Naive thymus-derived CD4-positive, alpha-beta T cell (primary cell): ENCODE measurements at regions of chr19 and their contacts with region 1.

Region 1: GRCh38 chr19:19627621-19628500 is at the start of gene LPAR2:
- DNase-seq: peak; percentile 73 to 90 (median 82)
- ATAC-seq: peak; percentile 95
- H3K4me3 ChIP-seq: peak within 1 kb of the TSS; percentile 79
- H3K4me3 Mint-ChIP-seq: peak within 1 kb of the TSS; percentile 91 to 100 (median 96)
- H3K27ac ChIP-seq: peak within 1 kb of the TSS; percentile 92
- H3K27ac Mint-ChIP-seq: peak within 1 kb of the TSS; percentile 86 to 98 (median 95)
- H3K4me1 ChIP-seq: peaks cover 6 to 18% of the 10 kb centered on the region in 2 donors
- H3K4me1 Mint-ChIP-seq: peaks cover 17 to 32% (median 27%) of the 10 kb centered on the region in 7 donors
- H3K27me3 ChIP-seq: no peaks in the 10 kb centered on the region
- H3K27me3 Mint-ChIP-seq: no peaks in the 10 kb centered on the region
- total RNA-seq, gene LPAR2: 64.4 to 91.7 (median 75.0) TPM

Region 2: DNA sequence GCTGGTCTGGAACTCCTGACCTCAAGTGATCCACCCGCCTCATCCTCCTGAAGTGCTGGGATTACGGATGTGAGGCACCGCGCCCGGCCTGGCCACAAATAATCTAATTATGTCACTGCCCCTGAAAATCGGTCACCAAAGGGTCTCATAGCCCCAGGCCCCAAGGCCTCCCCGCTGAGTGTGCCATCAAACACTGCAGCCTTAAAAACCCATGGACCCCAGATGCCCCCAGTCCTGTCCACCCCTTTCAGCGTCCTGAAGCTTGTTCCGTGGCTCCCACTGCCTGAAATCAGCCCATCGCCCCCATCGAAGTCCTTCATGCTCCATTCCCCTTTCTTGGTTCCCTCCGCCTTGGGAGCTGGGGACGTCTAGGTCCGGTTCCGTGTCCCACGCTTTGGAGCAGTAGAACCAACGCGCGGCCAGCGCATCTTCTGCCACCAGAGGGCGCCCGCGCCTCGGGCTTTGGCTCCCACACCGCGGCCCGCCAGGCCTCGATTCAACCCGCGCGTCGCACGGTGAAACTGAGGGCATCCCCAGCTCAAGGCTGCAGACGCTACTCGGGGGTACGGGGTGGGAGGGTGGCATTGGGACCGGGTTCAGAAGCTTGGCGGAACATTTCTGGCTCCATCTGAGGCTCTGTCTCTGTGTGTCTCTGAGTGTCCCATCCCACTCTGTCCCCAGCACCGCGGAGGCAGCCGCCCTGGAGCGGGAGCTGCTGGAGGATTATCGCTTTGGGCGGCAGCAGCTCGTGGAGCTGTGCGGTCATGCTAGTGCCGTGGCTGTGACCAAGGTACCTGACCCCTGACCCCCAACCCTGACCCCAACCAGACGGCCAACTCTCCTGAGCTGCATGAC is 95.7 kb before region 1 on chr19:
- CTCF ChIA-PET with region 1: interaction called, 5 read pairs
- POLR2A ChIA-PET with region 1: interaction called, 3 read pairs
- intact Hi-C with region 1: loop called in 1 of 2 experiments (anchors 5 kb)
- DNase-seq: peak; percentile 69 to 93 (median 84)
- ATAC-seq: peak; percentile 90
- H3K4me3 ChIP-seq: no peak overlapping the region
- H3K4me3 Mint-ChIP-seq: no peak overlapping the region
- H3K27ac ChIP-seq: no peak overlapping the region
- H3K27ac Mint-ChIP-seq: peak overlapping the region in 8 of 9 donors; percentile 33 to 84 (median 76)
- H3K4me1 ChIP-seq: peaks cover 3 to 9% of the 10 kb centered on the region in 2 donors
- H3K4me1 Mint-ChIP-seq: peaks cover 7 to 22% (median 17%) of the 10 kb centered on the region in 7 donors
- H3K27me3 ChIP-seq: no peaks in the 10 kb centered on the region
- H3K27me3 Mint-ChIP-seq: peaks cover 0 to 6% (median 0%) of the 10 kb centered on the region in 5 donors

Region 3: DNA sequence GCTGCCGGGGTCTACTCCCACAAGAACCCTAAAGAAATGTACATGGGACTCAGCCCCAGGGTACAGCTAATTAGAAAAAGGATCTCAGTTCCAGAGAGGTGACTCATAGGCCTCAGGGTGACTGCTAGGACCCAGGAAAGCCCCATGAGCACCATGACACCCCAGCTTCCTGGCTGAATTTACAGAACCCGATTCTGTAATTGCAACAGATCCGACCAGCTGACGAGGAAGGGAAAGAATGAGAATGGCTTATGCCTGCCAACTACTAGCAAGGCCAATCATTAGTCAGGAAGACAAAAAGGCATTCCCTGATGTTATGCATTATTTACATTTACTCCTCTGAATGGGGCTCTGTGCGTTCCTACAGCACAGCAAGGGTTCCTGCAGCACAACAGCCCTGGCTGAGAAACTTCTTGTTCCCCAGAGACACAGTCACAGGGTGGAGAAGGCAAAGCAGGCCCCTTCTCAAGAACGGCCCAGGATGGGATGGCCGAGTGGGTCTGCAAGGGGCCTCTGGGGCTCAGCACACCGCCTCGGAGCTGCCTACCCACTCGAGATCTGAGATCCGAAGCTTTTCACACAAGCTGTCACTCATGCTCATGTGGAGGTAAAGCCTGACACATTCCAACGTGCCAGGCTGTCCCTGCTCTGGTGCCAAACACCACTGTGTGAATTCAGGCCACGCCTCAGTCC is 36.6 kb before region 1 on chr19:
- CTCF ChIA-PET with region 1: no interaction called
- POLR2A ChIA-PET with region 1: interaction called, 12 read pairs
- intact Hi-C with region 1: loop called in 1 of 2 experiments (anchors 5 kb)
- DNase-seq: peak in 2 of 9 donors; percentile 66 to 67
- ATAC-seq: peak; percentile 89
- H3K4me3 ChIP-seq: no peak overlapping the region
- H3K4me3 Mint-ChIP-seq: peak overlapping the region in 5 of 10 donors; percentile 12 to 81 (median 21)
- H3K27ac ChIP-seq: peak overlapping the region; percentile 54
- H3K27ac Mint-ChIP-seq: peak overlapping the region; percentile 10 to 89 (median 71)
- H3K4me1 ChIP-seq: peaks cover 17 to 30% of the 10 kb centered on the region in 2 donors
- H3K4me1 Mint-ChIP-seq: peaks cover 25 to 74% (median 54%) of the 10 kb centered on the region in 7 donors
- H3K27me3 ChIP-seq: no peaks in the 10 kb centered on the region
- H3K27me3 Mint-ChIP-seq: no peaks in the 10 kb centered on the region

Region 4: DNA sequence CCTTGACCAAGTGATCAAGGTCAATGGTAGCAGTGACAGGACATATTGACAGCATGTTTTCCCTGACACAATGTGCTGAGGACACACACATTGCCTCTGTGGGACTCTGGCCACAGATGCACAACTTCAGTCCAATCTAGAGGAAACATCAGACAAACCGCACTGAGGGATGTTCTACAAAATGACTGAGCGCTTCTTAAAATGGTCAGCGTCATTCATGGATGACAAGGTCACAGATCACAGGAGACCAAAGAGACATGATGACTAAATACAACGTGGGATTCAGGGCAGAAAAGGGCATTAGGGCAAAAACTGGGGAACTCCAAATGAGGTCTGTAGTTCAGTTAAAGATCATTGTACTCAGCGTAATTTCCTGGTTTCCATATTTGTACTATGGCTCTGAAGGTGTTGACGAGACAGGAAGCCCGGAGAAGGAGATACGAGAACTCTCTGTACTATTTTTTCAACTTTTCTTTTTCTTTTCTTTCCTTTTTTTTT is 30.0 kb before region 1 on chr19:
- CTCF ChIA-PET with region 1: interaction called, 3 read pairs
- POLR2A ChIA-PET with region 1: interaction called, 20 read pairs
- intact Hi-C with region 1: loop called (anchors 1 to 5 kb)
- DNase-seq: peak in 8 of 9 donors; percentile 54 to 90 (median 84)
- ATAC-seq: peak; percentile 87
- H3K4me3 ChIP-seq: peak overlapping the region; percentile 52
- H3K4me3 Mint-ChIP-seq: peak overlapping the region; percentile 61 to 85 (median 74)
- H3K27ac ChIP-seq: peak overlapping the region; percentile 96
- H3K27ac Mint-ChIP-seq: peak overlapping the region; percentile 90 to 99 (median 97)
- H3K4me1 ChIP-seq: peaks cover 53 to 54% of the 10 kb centered on the region in 2 donors
- H3K4me1 Mint-ChIP-seq: peaks cover 29 to 75% (median 66%) of the 10 kb centered on the region in 7 donors
- H3K27me3 ChIP-seq: no peaks in the 10 kb centered on the region
- H3K27me3 Mint-ChIP-seq: no peaks in the 10 kb centered on the region

Region 5: DNA sequence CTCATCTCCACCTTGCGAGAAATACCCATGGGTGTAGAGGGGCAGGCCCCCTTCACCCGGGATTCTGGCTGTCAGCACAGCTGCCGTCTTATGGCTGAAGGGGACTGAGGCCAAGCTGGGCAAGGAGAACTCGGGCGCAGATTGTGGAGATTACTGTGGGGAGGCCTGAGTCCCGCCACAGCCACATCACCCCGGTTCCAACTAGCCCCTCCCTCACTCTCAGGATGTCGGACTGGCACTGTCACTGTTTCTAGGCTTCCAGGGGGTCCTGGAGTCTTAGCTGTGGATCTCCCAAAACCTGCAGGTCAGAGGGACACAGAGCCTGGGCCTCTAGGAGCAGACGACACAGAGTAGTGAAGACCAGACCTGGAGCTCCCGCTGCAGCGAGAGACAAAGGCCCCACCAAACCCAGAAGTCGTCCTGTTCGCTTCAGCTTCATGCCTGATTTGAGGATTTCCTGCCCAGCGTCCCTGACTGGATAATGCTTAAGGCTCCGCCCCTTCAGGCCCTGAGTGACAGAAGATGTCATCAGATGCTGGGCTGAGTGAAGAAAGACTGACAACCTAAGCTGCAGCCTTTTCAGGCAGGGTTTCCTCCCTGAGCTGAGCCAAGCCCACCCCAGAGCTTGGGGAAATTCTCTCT is 328.7 kb after region 1 on chr19:
- CTCF ChIA-PET with region 1: no interaction called
- POLR2A ChIA-PET with region 1: interaction called, 3 read pairs
- intact Hi-C with region 1: loop called in 1 of 2 experiments (anchors 5 kb)
- DNase-seq: no peak
- ATAC-seq: no peak
- H3K4me3 ChIP-seq: no peak overlapping the region
- H3K4me3 Mint-ChIP-seq: no peak overlapping the region
- H3K27ac ChIP-seq: no peak overlapping the region
- H3K27ac Mint-ChIP-seq: no peak overlapping the region
- H3K4me1 ChIP-seq: no peaks in the 10 kb centered on the region
- H3K4me1 Mint-ChIP-seq: peaks cover 0 to 8% (median 5%) of the 10 kb centered on the region in 7 donors
- H3K27me3 ChIP-seq: no peaks in the 10 kb centered on the region
- H3K27me3 Mint-ChIP-seq: no peaks in the 10 kb centered on the region